WTC11 (cell line): ENCODE measurements at regions of chr1 and their contacts with region 1.

Region 1: DNA sequence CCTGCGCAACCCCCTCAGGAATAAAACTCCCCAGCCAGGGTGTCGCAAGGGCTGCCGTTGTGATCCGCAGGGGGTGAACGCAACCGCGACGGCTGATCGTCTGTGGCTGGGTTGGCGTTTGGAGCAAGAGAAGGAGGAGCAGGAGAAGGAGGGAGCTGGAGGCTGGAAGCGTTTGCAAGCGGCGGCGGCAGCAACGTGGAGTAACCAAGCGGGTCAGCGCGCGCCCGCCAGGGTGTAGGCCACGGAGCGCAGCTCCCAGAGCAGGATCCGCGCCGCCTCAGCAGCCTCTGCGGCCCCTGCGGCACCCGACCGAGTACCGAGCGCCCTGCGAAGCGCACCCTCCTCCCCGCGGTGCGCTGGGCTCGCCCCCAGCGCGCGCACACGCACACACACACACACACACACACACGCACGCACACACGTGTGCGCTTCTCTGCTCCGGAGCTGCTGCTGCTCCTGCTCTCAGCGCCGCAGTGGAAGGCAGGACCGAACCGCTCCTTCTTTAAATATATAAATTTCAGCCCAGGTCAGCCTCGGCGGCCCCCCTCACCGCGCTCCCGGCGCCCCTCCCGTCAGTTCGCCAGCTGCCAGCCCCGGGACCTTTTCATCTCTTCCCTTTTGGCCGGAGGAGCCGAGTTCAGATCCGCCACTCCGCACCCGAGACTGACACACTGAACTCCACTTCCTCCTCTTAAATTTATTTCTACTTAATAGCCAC is 696 bp downstream of the TGFB2 start:
- DNase-seq: peak; percentile 58
- ATAC-seq: peak; percentile 60
- H3K4me3 Mint-ChIP-seq: no peak overlapping the region
- H3K27ac Mint-ChIP-seq: no peak overlapping the region
- H3K4me1 Mint-ChIP-seq: peaks cover 26% of the 10 kb centered on the region
- H3K27me3 Mint-ChIP-seq: peaks cover 15% of the 10 kb centered on the region
- CTCF ChIP-seq: no peak

Region 2: DNA sequence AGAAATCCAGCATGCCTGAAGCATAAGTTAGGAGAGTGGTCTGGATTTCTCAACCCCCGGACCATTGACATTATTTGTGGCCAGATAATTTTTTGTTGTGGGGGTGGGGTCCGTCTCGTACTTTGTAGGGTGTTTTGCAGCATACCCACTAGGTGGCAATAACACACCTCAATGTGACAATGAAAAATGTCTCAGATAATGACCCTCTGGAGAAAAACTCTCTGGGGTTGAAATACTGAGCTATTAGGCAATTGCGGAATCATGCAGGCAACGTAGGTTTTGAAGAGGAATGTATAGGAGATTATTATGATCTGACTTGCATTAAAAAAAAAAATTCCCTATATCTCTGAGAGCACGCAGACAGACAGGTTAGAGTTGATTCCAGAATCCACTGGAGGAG is 86.0 kb before region 1 on chr1:
- CTCF ChIA-PET with region 1: interaction called, 17 read pairs
- POLR2A ChIA-PET with region 1: no interaction called
- DNase-seq: no peak
- ATAC-seq: peak; percentile 89
- H3K4me3 Mint-ChIP-seq: no peak overlapping the region
- H3K27ac Mint-ChIP-seq: no peak overlapping the region
- H3K4me1 Mint-ChIP-seq: peaks cover 15% of the 10 kb centered on the region
- H3K27me3 Mint-ChIP-seq: no peaks in the 10 kb centered on the region
- CTCF ChIP-seq: 0 out of 2 replicates have a peak, but pooled peaks have one; percentile 41